B cell (primary cell): ENCODE measurements at regions of chr9 and their contacts with region 1.

Region 1: GRCh38 chr9:98974994-98975712 is 31.4 kb downstream of the COL15A1 start:
- DNase-seq: peak; percentile 82
- ATAC-seq: peak; percentile 99
- H3K4me3 ChIP-seq: peak overlapping the region in 4 of 5 experiments; percentile 3 to 47 (median 24)
- H3K4me3 Mint-ChIP-seq: peak overlapping the region; percentile 52
- H3K27ac ChIP-seq: no peak overlapping the region
- H3K27ac Mint-ChIP-seq: no peak overlapping the region
- H3K4me1 ChIP-seq: peaks cover 4 to 10% of the 10 kb centered on the region in 2 donors
- H3K4me1 Mint-ChIP-seq: peaks cover 6% of the 10 kb centered on the region
- H3K27me3 ChIP-seq: peaks cover 0 to 21% (median 10%) of the 10 kb centered on the region in 4 experiments
- H3K27me3 Mint-ChIP-seq: peaks cover 20% of the 10 kb centered on the region
- CTCF ChIP-seq: peak; percentile 97

Region 2: DNA sequence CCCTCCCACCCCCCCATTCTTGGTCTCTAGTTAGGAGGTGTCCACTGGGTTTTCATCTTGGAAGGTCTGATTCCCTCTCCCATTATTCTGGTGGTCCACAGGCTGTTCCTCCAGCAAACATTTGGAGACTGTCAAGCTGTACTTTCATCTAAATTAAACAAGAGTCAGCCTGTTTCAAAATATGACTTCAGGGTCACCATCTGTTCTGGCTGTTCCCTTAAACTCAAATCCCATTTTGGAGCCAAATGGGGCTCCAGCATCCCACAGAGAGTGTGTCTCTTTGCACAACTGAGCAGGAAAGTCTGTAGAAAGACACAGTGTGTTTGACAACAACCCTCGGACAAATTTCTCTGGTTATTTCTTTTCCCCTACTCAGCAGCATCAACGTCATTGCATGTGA is 11.0 kb before region 1 on chr9:
- CTCF ChIA-PET with region 1: interaction called, 12 read pairs
- POLR2A ChIA-PET with region 1: no interaction called
- intact Hi-C with region 1: no loop called
- DNase-seq: no peak
- ATAC-seq: no peak
- H3K4me3 ChIP-seq: no peak overlapping the region
- H3K4me3 Mint-ChIP-seq: no peak overlapping the region
- H3K27ac ChIP-seq: no peak overlapping the region
- H3K27ac Mint-ChIP-seq: no peak overlapping the region
- H3K4me1 ChIP-seq: no peaks in the 10 kb centered on the region
- H3K4me1 Mint-ChIP-seq: no peaks in the 10 kb centered on the region
- H3K27me3 ChIP-seq: no peaks in the 10 kb centered on the region
- H3K27me3 Mint-ChIP-seq: peaks cover 13% of the 10 kb centered on the region
- CTCF ChIP-seq: no peak